Dorsolateral prefrontal cortex (tissue), 120 donors: ENCODE measurements at regions of chr1 and their contacts with region 1.

Region 1: DNA sequence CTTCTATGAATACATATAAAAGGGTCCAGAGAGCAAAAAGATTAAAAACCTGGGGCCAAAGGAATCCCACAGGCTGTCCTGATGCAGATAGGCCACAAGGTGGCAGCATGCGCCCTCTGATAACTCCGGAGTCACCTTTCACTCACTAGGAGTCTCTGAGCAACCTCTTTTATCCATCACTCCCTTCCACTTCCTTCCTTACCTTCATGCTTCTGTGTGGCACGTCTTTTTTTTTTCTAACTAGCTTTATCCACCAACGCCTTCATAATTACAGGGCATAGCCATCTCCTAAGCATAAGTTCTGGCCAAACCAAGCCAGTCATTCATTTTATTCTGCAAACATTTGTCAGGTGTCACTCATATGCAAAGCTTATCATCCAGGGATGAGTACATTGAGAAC is 3.9 kb upstream of the PGLYRP4 start:
- DNase-seq: peak in 9 of 10 donors; percentile 56 to 82 (median 70)
- H3K4me3 ChIP-seq: no peak overlapping the region
- H3K27ac ChIP-seq: no peak overlapping the region
- H3K27me3 ChIP-seq: peaks cover 0 to 34% (median 14%) of the 10 kb centered on the region in 45 donors
- CTCF ChIP-seq: peak; percentile 84 to 99 (median 95)

Region 2: DNA sequence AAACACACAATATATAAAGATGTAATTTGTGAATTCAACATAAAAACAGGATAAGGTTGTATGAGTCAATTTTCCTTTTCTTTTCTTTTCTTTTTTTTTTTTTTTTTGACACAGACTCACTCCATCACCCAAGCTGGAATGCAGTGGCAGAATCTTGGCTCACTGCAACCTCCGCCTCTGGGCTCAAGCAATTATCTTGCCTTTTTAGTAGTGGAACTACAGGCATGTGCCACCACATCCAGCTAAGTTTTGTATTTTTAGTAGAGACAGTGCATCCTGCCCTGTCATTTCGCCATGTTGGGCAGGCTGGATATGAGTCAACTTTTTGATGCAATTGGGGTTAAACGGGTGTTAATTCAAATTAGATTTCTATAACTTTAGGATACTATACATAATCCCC is 270.8 kb before region 1 on chr1:
- intact Hi-C with region 1: no loop called
- DNase-seq: no peak
- H3K4me3 ChIP-seq: no peak overlapping the region
- H3K27ac ChIP-seq: no peak overlapping the region
- H3K27me3 ChIP-seq: peaks cover 0 to 3% (median 0%) of the 10 kb centered on the region in 45 donors
- CTCF ChIP-seq: no peak

Region 3: DNA sequence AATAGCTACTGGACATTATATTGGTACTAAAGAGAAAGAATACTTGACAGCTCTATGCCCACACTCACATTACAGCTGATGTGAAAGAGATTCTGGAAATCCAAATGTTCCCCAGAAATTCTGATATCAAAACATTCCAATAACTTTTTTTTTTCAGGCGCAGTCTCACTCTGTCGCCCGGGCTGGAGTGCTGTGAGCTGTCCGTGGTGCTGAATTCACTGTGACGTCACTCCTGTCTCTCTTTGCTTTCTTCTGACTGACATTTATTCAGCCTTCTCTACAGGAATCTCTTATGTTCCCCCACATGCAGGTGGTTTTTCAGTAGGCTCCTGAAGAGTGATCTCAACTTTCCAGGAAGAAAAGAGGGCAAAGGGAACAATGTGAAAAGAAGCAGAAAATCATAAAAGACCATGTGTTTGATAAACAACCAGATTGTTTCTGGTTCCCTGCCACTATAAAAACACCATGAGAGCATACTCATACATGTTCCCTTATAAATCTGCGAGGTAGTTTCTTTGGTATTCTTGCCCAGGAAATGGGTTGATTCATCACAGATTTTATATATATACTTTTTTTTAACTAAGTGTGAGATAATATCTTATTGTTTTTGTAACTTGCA is 70.0 kb after region 1 on chr1:
- intact Hi-C with region 1: no loop called
- DNase-seq: peak in 6 of 10 donors; percentile 18 to 66 (median 48)
- H3K4me3 ChIP-seq: no peak overlapping the region
- H3K27ac ChIP-seq: no peak overlapping the region
- H3K27me3 ChIP-seq: peaks cover 0 to 14% (median 0%) of the 10 kb centered on the region in 45 donors
- CTCF ChIP-seq: peak in 11 of 56 donors; percentile 7 to 38 (median 19)

Region 4: GRCh38 chr1:153494976-153495535 is 142.5 kb after region 1 on chr1:
- intact Hi-C with region 1: loop called (anchors 2 kb)
- DNase-seq: peak in 9 of 10 donors; percentile 27 to 71 (median 64)
- H3K4me3 ChIP-seq: no peak overlapping the region
- H3K27ac ChIP-seq: no peak overlapping the region
- H3K27me3 ChIP-seq: peaks cover 0 to 6% (median 0%) of the 10 kb centered on the region in 45 donors
- CTCF ChIP-seq: peak; percentile 65 to 97 (median 90)